Activated T-helper 1 cell treated with anti-CD3 and anti-CD28 coated beads, Interleukin-12 subunit alpha, Interleukin-12 subunit beta, Interleukin-2, Interleukin-4 antibody, amounts not matched to agents 30 ng/mL and 10 ng/mL and 1 ng/mL, durations not matched to agents 14 hours and 24 hours and 36 hours (primary cell): ENCODE measurements at regions of chr2 and their contacts with region 1.

Region 1: GRCh38 chr2:74321737-74322136 is 21.5 kb downstream of the SLC4A5 start:
- DNase-seq: no peak
- H3K4me3 Mint-ChIP-seq: no peak overlapping the region
- H3K27ac Mint-ChIP-seq: no peak overlapping the region
- H3K4me1 Mint-ChIP-seq: no peaks in the 10 kb centered on the region
- H3K27me3 Mint-ChIP-seq: peaks cover 4% of the 10 kb centered on the region

Region 2: DNA sequence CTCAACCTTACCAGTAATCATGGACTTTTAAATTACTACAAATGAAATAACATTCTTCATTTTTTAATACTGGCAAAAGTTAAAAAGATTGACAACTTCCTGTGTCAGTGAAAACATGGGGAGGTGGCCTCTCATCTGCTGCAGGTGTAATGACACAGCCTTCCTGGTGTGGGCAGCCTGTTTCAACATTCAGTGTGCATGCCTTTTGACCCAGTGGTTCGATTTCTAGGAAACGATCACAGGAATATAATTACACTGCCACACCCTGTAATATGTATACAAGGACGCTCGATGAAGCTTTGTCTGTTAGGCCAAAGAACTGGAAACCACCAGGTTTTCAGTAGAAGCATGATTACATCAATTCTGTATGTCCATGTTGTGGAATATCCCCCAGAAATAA is 54.7 kb before region 1 on chr2:
- intact Hi-C with region 1: no loop called
- DNase-seq: peak; percentile 43
- H3K4me3 Mint-ChIP-seq: no peak overlapping the region
- H3K27ac Mint-ChIP-seq: peak overlapping the region; percentile 23
- H3K4me1 Mint-ChIP-seq: peaks cover 13% of the 10 kb centered on the region
- H3K27me3 Mint-ChIP-seq: peaks cover 2% of the 10 kb centered on the region

Region 3: DNA sequence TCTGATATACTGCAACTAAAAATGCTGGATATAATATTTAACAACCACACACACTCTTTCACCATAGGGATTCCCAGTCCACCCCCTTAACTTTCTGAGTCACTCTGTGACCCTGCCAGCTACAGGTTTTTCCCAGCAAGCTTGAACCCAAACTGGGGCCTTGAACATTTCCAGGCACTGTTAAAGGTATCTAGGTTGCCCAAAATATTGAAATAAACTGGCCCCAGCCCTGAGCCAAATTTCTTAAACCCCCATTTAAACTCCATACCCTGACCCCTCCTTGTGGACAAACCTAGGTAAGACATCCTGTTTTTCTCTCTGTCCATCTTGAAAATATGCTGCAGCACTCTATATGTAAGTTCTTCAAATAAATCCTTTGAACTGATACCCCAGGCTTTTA is 78.0 kb after region 1 on chr2:
- intact Hi-C with region 1: loop called (anchors 2 kb)
- DNase-seq: no peak
- H3K4me3 Mint-ChIP-seq: no peak overlapping the region
- H3K27ac Mint-ChIP-seq: no peak overlapping the region
- H3K4me1 Mint-ChIP-seq: peaks cover 9% of the 10 kb centered on the region
- H3K27me3 Mint-ChIP-seq: peaks cover 12% of the 10 kb centered on the region